Activated naive CD4-positive, alpha-beta T cell treated with anti-CD3 and anti-CD28 coated beads, Interleukin-2, amount 10 ng/mL, durations not matched to agents 7 days and 5 days (primary cell): ENCODE measurements at regions of chr1 and their contacts with region 1.

Region 1: GRCh38 chr1:204516180-204516879 is at the start of gene MDM4:
- DNase-seq: peak; percentile 96
- H3K4me3 Mint-ChIP-seq: no peak within 1 kb of the TSS
- H3K27ac Mint-ChIP-seq: no peak within 1 kb of the TSS
- H3K4me1 Mint-ChIP-seq: peaks cover 76% of the 10 kb centered on the region
- H3K27me3 Mint-ChIP-seq: no peaks in the 10 kb centered on the region

Region 2: DNA sequence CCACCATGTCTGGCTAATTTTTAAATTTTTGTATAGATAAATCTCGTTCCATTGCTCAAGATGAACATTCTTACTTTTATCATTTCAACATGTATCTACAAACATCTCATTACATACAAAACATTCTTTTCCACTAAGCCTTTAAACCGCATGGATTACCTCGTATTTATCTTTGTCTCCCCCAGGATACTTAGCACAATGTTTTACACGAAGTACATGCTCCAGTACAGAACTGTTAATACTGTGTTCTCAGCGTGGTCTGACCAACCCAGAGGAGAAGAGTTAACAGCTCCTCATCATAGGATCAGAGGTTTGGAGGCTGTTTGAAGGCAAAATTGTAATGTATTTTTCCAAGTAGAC is 29.1 kb before region 1 on chr1:
- CTCF ChIA-PET with region 1: no interaction called
- DNase-seq: no peak
- H3K4me3 Mint-ChIP-seq: no peak overlapping the region
- H3K27ac Mint-ChIP-seq: no peak overlapping the region
- H3K4me1 Mint-ChIP-seq: peaks cover 27% of the 10 kb centered on the region
- H3K27me3 Mint-ChIP-seq: no peaks in the 10 kb centered on the region

Region 3: GRCh38 chr1:204544321-204544720 is 28.0 kb after region 1 on chr1:
- CTCF ChIA-PET with region 1: interaction called, 14 read pairs
- DNase-seq: no peak
- H3K4me3 Mint-ChIP-seq: peak overlapping the region; percentile 24
- H3K27ac Mint-ChIP-seq: peak overlapping the region; percentile 92
- H3K4me1 Mint-ChIP-seq: peaks cover 59% of the 10 kb centered on the region
- H3K27me3 Mint-ChIP-seq: no peaks in the 10 kb centered on the region

Region 4: GRCh38 chr1:204600968-204601367 is 84.6 kb after region 1 on chr1:
- CTCF ChIA-PET with region 1: no interaction called
- DNase-seq: no peak
- H3K4me3 Mint-ChIP-seq: no peak overlapping the region
- H3K27ac Mint-ChIP-seq: no peak overlapping the region
- H3K4me1 Mint-ChIP-seq: no peaks in the 10 kb centered on the region
- H3K27me3 Mint-ChIP-seq: no peaks in the 10 kb centered on the region